GM18951 (cell line): ENCODE measurements at regions of chr2 and their contacts with region 1.

Region 1: GRCh38 chr2:230999477-230999876 is 3.6 kb downstream of the SPATA3 start:
- POLR2A ChIP-seq: no peak

Region 2: GRCh38 chr2:230520875-230521155 is 478.7 kb before region 1 on chr2:
- in situ Hi-C with region 1: no loop called
- POLR2A ChIP-seq: no peak

Region 3: DNA sequence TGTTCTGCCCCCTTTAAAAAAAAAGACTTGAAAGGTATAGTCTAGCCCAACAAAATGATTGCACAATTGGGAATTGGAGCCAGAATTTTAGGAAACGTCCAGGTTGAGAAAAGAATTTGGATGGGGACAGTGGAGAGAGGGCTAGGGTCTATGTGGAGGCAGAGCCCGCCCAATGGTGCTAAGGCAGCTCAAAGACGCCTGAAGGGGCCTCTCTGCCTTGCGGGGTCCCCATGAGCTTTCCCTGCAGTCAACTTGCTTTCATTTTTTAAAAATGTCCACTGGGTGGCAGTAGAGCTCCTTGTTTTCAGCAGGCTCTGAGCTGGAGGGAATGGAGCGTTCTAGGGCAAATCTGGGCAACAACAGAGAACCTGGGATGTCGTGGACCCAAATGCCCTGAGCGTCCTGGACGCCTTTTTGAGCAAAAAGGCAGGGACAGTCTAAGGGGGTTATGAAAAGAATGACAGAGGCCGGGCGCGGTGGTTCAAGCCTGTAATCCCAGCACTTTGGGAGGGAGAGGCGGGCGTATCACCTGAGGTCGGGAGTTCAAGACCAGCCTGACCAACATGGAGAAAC is 175.0 kb before region 1 on chr2:
- in situ Hi-C with region 1: loop called (anchors 10 kb)
- POLR2A ChIP-seq: no peak